Astrocyte of the cerebellum (primary cell): ENCODE measurements at regions of chr9 and their contacts with region 1.

Region 1: DNA sequence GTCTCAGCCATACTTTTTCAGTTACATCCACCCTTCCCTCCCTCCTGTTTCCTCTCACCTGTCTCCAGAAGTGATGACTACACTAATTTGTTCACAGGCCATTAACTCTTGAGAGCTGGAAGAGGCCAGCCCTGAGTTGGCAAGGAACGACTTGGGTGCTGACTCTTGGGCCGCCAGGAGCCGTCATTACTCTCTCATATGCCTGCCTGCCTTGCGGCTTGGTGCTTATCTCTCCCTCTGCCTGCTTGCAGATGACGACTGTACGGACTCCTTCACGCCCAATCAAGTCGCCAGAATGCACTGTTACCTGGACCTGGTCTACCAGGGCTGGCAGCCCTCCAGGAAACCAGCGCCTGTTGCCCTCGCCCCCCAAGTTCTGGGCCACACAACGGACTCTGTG is 66.1 kb downstream of the PAPPA start:
- DNase-seq: no peak
- H3K4me3 ChIP-seq: no peak overlapping the region
- CTCF ChIP-seq: no peak

Region 2: GRCh38 chr9:116163293-116164055 is 56.2 kb before region 1 on chr9:
- in situ Hi-C with region 1: loop called (anchors 5 kb)
- DNase-seq: no peak
- H3K4me3 ChIP-seq: no peak overlapping the region
- CTCF ChIP-seq: peak; percentile 50